CD8-positive, alpha-beta T cell (primary cell): ENCODE measurements at regions of chr4 and their contacts with region 1.

Region 1: GRCh38 chr4:26319467-26319948 is 1.3 kb upstream of the RBPJ start:
- DNase-seq: peak; percentile 91 to 99 (median 96)
- ATAC-seq: peak; percentile 60
- H3K4me3 ChIP-seq: peak overlapping the region; percentile 91 to 100
- H3K4me3 Mint-ChIP-seq: peak overlapping the region; percentile 99
- H3K27ac ChIP-seq: peak overlapping the region; percentile 83 to 89
- H3K27ac Mint-ChIP-seq: peak overlapping the region; percentile 100
- H3K4me1 ChIP-seq: peaks cover 14% of the 10 kb centered on the region
- H3K4me1 Mint-ChIP-seq: peaks cover 37% of the 10 kb centered on the region
- H3K27me3 ChIP-seq: no peaks in the 10 kb centered on the region
- H3K27me3 Mint-ChIP-seq: no peaks in the 10 kb centered on the region
- CTCF ChIP-seq: no peak

Region 2: GRCh38 chr4:25159884-25160713 is 1159.4 kb before region 1 on chr4 and contains the start of gene SEPSECS:
- CTCF ChIA-PET with region 1: no interaction called
- POLR2A ChIA-PET with region 1: interaction called, 3 read pairs
- intact Hi-C with region 1: loop called in 1 of 2 experiments (anchors 10 kb)
- DNase-seq: peak; percentile 82 to 99 (median 94)
- ATAC-seq: peak; percentile 79
- H3K4me3 ChIP-seq: peak within 1 kb of the TSS; percentile 60 to 79
- H3K4me3 Mint-ChIP-seq: peak within 1 kb of the TSS; percentile 91
- H3K27ac ChIP-seq: peak within 1 kb of the TSS; percentile 97 to 98
- H3K27ac Mint-ChIP-seq: peak within 1 kb of the TSS; percentile 94
- H3K4me1 ChIP-seq: peaks cover 18% of the 10 kb centered on the region
- H3K4me1 Mint-ChIP-seq: peaks cover 52% of the 10 kb centered on the region
- H3K27me3 ChIP-seq: no peaks in the 10 kb centered on the region
- H3K27me3 Mint-ChIP-seq: no peaks in the 10 kb centered on the region
- CTCF ChIP-seq: no peak
- total RNA-seq, gene SEPSECS: 12.5 to 13.4 TPM

Region 3: GRCh38 chr4:25376754-25377571 is 942.5 kb before region 1 on chr4 and contains the start of gene ANAPC4:
- CTCF ChIA-PET with region 1: no interaction called
- POLR2A ChIA-PET with region 1: no interaction called
- intact Hi-C with region 1: loop called (anchors 5 kb)
- DNase-seq: peak; percentile 95 to 100 (median 98)
- ATAC-seq: peak; percentile 95
- H3K4me3 ChIP-seq: peak within 1 kb of the TSS; percentile 89 to 96
- H3K4me3 Mint-ChIP-seq: no peak within 1 kb of the TSS
- H3K27ac ChIP-seq: peak within 1 kb of the TSS; percentile 60 to 64
- H3K27ac Mint-ChIP-seq: peak within 1 kb of the TSS; percentile 90
- H3K4me1 ChIP-seq: peaks cover 21% of the 10 kb centered on the region
- H3K4me1 Mint-ChIP-seq: peaks cover 16% of the 10 kb centered on the region
- H3K27me3 ChIP-seq: no peaks in the 10 kb centered on the region
- H3K27me3 Mint-ChIP-seq: no peaks in the 10 kb centered on the region
- CTCF ChIP-seq: no peak
- total RNA-seq, gene ANAPC4: 28.0 to 30.5 TPM

Region 4: DNA sequence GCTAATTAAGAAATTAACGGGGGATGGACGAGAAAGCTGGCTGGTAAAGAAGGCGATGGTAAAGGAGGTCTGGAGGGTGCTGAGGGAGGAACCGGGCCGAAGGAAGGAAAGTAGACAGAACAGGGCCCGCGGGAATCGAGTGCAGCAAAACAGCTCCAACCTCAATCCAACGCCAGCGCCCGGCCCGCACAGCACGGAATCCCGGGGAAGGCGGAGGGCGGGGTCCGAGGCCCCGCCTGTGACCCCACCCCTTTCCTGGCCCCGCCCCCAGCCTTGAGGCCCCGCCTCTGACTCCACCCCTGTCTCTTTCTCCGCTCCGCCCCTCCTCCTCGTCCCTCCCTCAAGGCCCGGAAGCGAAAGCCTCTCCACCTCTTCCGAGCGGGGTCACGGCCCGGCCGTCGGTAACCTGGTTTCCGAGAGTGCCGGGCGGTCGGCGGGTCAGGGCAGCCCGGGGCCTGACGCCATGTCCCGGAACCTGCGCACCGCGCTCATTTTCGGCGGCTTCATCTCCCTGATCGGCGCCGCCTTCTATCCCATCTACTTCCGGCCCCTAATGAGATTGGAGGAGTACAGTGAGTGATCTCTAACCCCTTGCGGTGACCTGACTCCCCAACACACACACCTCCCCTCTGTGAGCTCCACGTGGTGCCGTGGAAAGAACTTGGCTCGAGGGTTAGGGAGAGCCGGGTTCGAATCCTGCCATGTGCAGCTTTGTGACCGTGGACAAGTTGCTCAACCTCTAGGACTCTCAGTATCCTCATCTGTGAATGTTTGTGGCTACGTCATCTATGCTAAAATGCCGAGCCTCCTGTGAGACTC is 405.4 kb before region 1 on chr4 and contains the start of gene SMIM20:
- CTCF ChIA-PET with region 1: interaction called, 3 read pairs
- POLR2A ChIA-PET with region 1: interaction called, 3 read pairs
- intact Hi-C with region 1: loop called (anchors 1 kb)
- DNase-seq: peak; percentile 81 to 95 (median 87)
- ATAC-seq: peak; percentile 94
- H3K4me3 ChIP-seq: peak within 1 kb of the TSS; percentile 72 to 78
- H3K4me3 Mint-ChIP-seq: peak within 1 kb of the TSS; percentile 97
- H3K27ac ChIP-seq: peak within 1 kb of the TSS; percentile 81 to 95
- H3K27ac Mint-ChIP-seq: peak within 1 kb of the TSS; percentile 98
- H3K4me1 ChIP-seq: peaks cover 18% of the 10 kb centered on the region
- H3K4me1 Mint-ChIP-seq: peaks cover 24% of the 10 kb centered on the region
- H3K27me3 ChIP-seq: no peaks in the 10 kb centered on the region
- H3K27me3 Mint-ChIP-seq: no peaks in the 10 kb centered on the region
- CTCF ChIP-seq: no peak
- total RNA-seq, gene SMIM20: 7.5 to 9.8 TPM

Region 5: DNA sequence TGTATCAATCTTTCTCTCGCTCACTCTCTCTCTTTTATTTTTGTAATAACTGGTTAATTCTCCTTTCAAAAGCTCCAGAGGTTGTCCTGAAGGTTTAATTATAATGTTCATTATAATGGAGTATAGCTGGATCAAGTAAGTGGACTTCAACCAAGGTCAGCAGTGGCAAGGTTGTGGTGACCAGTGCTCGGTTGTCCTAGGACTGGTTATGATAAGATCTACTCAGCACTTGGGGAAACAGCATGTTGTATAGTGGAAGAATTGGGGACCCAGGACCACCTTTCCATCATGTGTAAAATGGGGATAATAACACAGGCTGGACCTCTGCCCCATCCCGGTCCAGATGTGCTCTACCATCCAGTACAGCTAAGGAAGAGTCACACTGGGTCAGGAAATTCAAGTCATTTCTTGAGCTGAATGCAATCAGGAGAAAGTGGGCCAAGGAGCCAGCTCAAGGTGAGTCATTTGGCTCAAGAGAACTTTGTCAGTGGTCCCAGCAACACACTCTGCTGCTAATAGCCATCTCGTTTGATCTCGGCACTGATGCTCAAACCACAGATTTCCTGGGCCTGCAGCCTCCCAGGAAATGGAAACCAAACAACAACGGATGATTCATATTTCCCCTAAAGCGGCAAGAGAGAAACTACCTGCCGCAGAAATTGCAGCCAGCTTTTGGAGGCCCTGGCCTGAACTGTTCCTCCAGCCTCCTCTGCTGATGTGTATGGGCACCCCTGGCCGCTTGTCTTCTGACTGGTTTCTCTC is 122.3 kb before region 1 on chr4:
- CTCF ChIA-PET with region 1: interaction called, 3 read pairs
- POLR2A ChIA-PET with region 1: interaction called, 5 read pairs
- intact Hi-C with region 1: loop called (anchors 5 kb)
- DNase-seq: peak; percentile 5 to 82 (median 67)
- ATAC-seq: peak; percentile 82
- H3K4me3 ChIP-seq: peak overlapping the region in 1 of 2 experiments; percentile 13
- H3K4me3 Mint-ChIP-seq: peak overlapping the region; percentile 33
- H3K27ac ChIP-seq: peak overlapping the region in 1 of 2 experiments; percentile 60
- H3K27ac Mint-ChIP-seq: peak overlapping the region; percentile 84
- H3K4me1 ChIP-seq: peaks cover 29% of the 10 kb centered on the region
- H3K4me1 Mint-ChIP-seq: peaks cover 40% of the 10 kb centered on the region
- H3K27me3 ChIP-seq: no peaks in the 10 kb centered on the region
- H3K27me3 Mint-ChIP-seq: no peaks in the 10 kb centered on the region
- CTCF ChIP-seq: no peak